ENCODE measurements at regions of chr11 and their contacts with region 1.

Region 1: DNA sequence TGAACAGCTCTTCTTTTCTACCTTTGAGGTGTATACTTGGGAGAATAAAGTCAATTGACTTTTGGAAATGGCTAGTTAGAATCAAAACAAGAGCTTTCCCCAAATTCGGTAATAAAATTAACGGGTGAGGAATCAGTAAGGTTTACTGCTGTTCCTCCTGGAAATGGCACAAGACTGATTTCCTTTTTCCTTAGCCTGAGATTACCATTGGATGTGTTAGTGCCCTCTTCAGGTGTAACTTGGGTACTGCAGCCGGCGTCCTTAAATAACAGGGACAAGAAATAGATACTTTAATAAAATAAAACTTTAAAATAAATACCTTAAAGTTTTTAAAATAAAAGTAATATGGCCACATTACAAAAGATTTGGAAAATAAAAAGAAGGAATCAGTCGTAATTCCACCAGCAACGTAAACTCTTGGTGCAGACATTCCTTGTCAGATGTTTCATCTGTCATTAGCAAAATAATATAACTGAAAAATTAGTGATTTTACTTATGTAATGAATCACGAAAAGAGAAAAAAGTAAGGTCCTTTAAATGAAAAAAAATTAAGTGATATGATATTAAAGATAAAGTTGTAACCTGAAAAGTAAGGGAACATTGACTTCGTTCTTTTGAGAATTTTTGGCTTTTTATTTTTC is 29.7 kb downstream of the ZFTA start:
- DNase-seq: peak; percentile 70
- ATAC-seq: peak; percentile 58 to 59

Region 2: DNA sequence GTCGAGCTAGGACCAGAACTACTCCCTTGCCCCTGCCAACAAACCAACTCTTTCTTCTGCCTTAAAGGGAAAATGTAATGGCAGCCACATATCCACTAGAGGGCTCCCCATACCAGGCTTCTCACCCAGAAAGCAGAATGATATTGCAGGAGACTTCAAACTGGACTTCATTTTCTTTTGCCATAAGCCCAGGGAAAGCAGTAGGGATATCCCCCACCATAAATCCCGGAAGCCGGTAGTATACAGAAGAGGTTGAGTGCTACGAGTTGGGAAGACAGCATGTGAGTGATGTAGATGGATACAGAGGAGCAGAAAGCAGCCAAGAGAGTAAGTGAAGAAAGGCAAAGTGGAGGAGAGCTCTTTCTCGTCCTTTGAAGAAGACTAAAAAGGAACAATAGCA is 259.9 kb before region 1 on chr11:
- intact Hi-C with region 1: loop called (anchors 5 to 10 kb)
- DNase-seq: peak; percentile 37
- ATAC-seq: peak; percentile 88 to 91

Region 3: GRCh38 chr11:63567044-63567840 is 171.6 kb before region 1 on chr11:
- intact Hi-C with region 1: no loop called
- DNase-seq: no peak
- ATAC-seq: peak; percentile 61 to 97

Region 4: GRCh38 chr11:63671322-63672155 is 67.3 kb before region 1 on chr11 and contains the start of gene ATL3:
- intact Hi-C with region 1: loop called in 1 of 2 experiments (anchors 10 kb)
- DNase-seq: peak; percentile 98
- ATAC-seq: peak; percentile 95 to 96
- total RNA-seq, gene ATL3: 31.4 to 36.2 TPM

Region 5: DNA sequence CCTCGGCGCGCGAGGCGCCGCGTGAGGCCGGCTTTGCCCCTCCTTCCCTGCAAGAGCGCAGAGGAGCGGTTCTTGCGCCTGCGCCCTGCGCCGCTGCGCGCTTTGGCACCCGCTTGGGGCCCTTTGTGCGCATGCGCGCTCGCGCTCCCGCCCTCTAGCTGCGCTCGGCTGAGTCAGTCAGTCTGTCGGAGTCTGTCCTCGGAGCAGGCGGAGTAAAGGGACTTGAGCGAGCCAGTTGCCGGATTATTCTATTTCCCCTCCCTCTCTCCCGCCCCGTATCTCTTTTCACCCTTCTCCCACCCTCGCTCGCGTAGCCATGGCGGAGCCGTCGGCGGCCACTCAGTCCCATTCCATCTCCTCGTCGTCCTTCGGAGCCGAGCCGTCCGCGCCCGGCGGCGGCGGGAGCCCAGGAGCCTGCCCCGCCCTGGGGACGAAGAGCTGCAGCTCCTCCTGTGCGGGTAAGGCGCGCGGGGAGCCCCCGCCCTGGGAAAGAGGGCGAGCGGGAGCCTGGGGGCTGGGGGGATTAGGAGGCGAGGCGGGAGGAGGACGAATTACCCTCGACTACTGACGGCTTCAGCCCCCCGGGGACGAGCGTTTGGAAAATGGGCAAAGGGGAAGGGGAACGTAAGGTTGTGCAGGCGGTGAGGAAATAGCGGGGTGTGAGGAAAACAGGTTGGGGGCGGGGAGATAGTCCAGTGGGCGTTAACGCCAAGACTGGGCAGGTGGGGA is 57.4 kb before region 1 on chr11 and contains the start of gene RTN3:
- intact Hi-C with region 1: loop called (anchors 10 kb)
- DNase-seq: peak; percentile 98
- ATAC-seq: peak; percentile 96
- total RNA-seq, gene RTN3: 71.9 to 92.5 TPM